CD14-positive monocyte (primary cell): ENCODE measurements at regions of chr10 and their contacts with region 1.

Region 1: DNA sequence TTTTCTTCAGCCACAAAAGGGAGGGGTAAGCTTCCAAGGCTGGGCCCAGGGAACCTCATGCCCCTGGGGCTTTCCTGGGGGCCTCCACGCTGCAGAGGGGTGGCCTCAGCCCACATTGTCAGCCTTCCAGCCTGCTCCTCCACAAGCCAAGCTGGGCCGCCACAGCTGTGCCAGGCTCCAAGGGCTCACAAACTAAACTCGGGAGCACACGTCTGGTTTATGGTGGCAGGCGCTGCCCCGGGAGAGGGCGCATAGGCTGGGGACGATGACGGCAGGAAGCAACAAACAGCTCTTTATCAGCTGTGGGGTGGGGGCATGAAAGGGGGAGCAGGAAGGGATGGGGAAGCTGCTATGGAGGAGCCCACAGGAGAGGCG is 6.3 kb upstream of the CDH23 start:
- DNase-seq: no peak
- H3K4me3 ChIP-seq: no peak overlapping the region
- H3K4me3 Mint-ChIP-seq: peak overlapping the region in 1 of 2 donors; percentile 27
- H3K27ac ChIP-seq: no peak overlapping the region
- H3K27ac Mint-ChIP-seq: no peak overlapping the region
- H3K4me1 ChIP-seq: no peaks in the 10 kb centered on the region
- H3K4me1 Mint-ChIP-seq: peaks cover 5% of the 10 kb centered on the region
- H3K27me3 ChIP-seq: peaks cover under 1 to 14% of the 10 kb centered on the region in 2 donors
- H3K27me3 Mint-ChIP-seq: peaks cover 19 to 24% (median 23%) of the 10 kb centered on the region in 3 donors
- CTCF ChIP-seq: no peak

Region 2: GRCh38 chr10:71700731-71701368 is 310.4 kb after region 1 on chr10:
- intact Hi-C with region 1: loop called (anchors 5 kb)
- DNase-seq: no peak
- H3K4me3 ChIP-seq: peak overlapping the region in 1 of 3 experiments; percentile 43
- H3K4me3 Mint-ChIP-seq: peak overlapping the region in 1 of 2 donors; percentile 59
- H3K27ac ChIP-seq: peak overlapping the region; percentile 85 to 90
- H3K27ac Mint-ChIP-seq: peak overlapping the region; percentile 83 to 95 (median 91)
- H3K4me1 ChIP-seq: peaks cover 71 to 75% of the 10 kb centered on the region in 2 donors
- H3K4me1 Mint-ChIP-seq: peaks cover 74% of the 10 kb centered on the region
- H3K27me3 ChIP-seq: no peaks in the 10 kb centered on the region
- H3K27me3 Mint-ChIP-seq: peaks cover 0 to 1% (median 0%) of the 10 kb centered on the region in 3 donors
- CTCF ChIP-seq: no peak

Region 3: DNA sequence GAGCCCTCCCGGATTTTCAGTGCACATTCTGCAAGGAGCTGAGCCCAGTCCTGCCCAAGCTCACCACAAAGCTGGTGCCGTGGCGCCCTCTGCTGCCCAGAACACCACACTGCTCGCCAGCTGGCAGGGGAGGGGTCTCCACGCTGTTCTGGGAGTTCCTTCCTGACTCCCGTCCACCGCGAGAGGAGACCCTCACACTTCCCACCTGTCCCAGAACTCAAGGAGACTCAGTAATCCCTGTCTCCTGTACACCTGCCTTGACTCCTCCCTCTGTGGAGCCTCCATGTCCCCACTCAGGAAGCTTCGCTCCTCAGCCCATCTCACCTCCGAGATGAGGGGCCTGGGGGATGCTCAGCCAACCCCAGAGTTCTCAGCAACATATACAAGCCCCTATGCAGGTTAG is 317.9 kb after region 1 on chr10:
- intact Hi-C with region 1: loop called (anchors 5 kb)
- DNase-seq: peak; percentile 43 to 63 (median 61)
- H3K4me3 ChIP-seq: no peak overlapping the region
- H3K4me3 Mint-ChIP-seq: no peak overlapping the region
- H3K27ac ChIP-seq: no peak overlapping the region
- H3K27ac Mint-ChIP-seq: peak overlapping the region in 1 of 7 donors; percentile 68
- H3K4me1 ChIP-seq: peaks cover 51 to 58% of the 10 kb centered on the region in 2 donors
- H3K4me1 Mint-ChIP-seq: peaks cover 63% of the 10 kb centered on the region
- H3K27me3 ChIP-seq: no peaks in the 10 kb centered on the region
- H3K27me3 Mint-ChIP-seq: peaks cover 0 to 2% (median 0%) of the 10 kb centered on the region in 3 donors
- CTCF ChIP-seq: peak; percentile 99